ENCODE measurements at regions of chr14 and their contacts with region 1.

Region 1: DNA sequence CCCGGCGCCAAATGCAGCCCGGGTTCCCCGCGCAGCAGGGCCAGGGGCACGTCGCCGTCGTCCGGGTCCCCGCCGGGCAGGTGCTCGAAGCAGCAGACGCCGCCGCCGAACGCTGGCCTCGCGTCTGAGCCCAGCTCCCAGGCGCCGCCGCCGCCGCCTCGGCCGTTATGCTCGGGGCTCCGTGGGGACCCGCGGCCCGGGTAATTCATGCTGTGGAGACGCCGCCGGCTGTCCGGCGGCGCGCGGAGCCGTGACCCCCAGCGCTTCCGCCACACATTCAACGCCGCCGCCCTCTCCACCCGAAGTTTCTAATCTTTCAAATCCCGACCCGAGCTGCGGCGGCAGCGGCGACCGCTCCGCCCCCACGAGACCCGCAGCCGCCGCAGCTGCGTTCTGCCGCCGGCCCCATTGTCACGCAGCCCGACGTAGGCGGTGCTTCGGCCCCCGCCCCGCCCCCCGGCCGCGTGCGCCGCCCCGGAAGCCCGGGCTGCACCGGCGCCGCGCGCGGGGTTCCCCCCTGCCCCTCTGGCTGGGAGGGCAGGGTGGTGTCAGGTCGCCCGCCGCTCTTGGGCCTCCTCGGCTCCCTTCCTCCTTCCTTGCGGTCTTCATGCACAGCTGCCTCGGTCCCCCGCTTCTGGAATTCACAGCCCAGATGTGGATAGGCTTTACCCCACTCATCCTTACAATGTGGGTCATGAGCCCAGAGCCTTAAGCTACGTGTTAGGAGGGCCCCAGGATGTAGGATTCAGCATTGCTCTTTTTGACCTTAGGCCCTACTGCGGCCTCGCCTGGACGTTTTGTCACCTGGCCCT is at the start of gene DDHD1:
- DNase-seq: peak; percentile 88
- H3K4me3 Mint-ChIP-seq: peak within 1 kb of the TSS; percentile 100
- H3K27ac Mint-ChIP-seq: peak within 1 kb of the TSS; percentile 99
- H3K4me1 Mint-ChIP-seq: peaks cover 35% of the 10 kb centered on the region
- H3K27me3 Mint-ChIP-seq: no peaks in the 10 kb centered on the region
- total RNA-seq, gene DDHD1: 40.6 to 42.7 TPM

Region 2: GRCh38 chr14:52729925-52730667 is 423.0 kb before region 1 on chr14 and contains the start of gene STYX:
- CTCF ChIA-PET with region 1: no interaction called
- POLR2A ChIA-PET with region 1: interaction called, 3 read pairs
- intact Hi-C with region 1: loop called (anchors 10 kb)
- DNase-seq: peak; percentile 99
- H3K4me3 Mint-ChIP-seq: peak within 1 kb of the TSS; percentile 87
- H3K27ac Mint-ChIP-seq: peak within 1 kb of the TSS; percentile 82
- H3K4me1 Mint-ChIP-seq: peaks cover 29% of the 10 kb centered on the region
- H3K27me3 Mint-ChIP-seq: no peaks in the 10 kb centered on the region
- total RNA-seq, gene STYX: 15.9 to 17.0 TPM

Region 3: GRCh38 chr14:52950898-52951689 is 202.0 kb before region 1 on chr14 and contains the start of gene FERMT2:
- CTCF ChIA-PET with region 1: no interaction called
- POLR2A ChIA-PET with region 1: no interaction called
- intact Hi-C with region 1: loop called (anchors 2 kb)
- DNase-seq: peak; percentile 40
- H3K4me3 Mint-ChIP-seq: peak within 1 kb of the TSS; percentile 83
- H3K27ac Mint-ChIP-seq: peak within 1 kb of the TSS; percentile 9
- H3K4me1 Mint-ChIP-seq: peaks cover 33% of the 10 kb centered on the region
- H3K27me3 Mint-ChIP-seq: peaks cover 43% of the 10 kb centered on the region
- total RNA-seq, gene FERMT2: 3.8 to 5.3 TPM

Region 4: DNA sequence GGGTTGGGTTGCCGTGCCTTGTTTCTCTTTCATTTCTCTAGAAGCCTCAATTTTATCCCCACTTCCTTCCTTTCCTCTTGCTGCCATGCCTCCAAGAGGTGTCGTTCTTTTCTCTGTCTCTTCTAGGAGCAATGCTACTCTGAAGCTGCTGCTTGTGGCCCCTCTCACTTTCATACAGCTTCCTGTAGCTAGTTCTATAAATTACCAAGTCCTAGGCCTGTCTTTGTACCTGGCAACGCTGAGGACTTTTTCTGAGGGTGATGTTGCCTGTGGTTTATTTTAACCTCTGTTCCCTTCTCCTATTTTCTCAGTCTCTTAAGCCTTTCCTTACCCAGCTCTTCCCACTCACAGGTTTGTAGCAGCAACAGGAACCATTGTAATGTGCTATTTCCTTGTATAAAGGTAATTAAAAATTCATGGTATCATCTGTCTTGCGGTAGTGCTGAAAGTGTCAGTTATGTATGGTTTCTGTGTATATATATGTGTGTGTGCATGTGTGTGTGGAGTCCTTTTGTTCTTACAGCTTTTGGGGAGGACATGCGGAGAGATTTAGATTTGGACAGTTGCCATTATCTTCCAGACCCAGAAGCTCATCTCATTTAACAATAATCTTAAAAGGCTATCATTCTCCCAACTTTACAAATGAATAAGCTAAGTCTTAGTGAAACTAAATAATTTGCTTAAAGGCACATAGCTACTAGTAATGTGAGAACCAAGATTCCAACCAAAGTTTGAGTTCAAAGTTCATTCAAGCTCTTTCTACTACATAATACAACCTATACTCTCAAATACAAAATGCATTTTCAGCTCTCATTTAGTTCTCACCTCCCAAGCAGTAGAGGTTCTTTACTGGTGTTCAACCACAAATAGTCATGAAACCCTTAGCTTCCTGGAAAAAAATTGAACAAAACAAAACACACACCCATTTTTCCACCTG is 43.7 kb before region 1 on chr14:
- CTCF ChIA-PET with region 1: interaction called, 27 read pairs
- POLR2A ChIA-PET with region 1: interaction called, 55 read pairs
- intact Hi-C with region 1: loop called (anchors 1 kb)
- DNase-seq: peak; percentile 76
- H3K4me3 Mint-ChIP-seq: no peak overlapping the region
- H3K27ac Mint-ChIP-seq: no peak overlapping the region
- H3K4me1 Mint-ChIP-seq: peaks cover 23% of the 10 kb centered on the region
- H3K27me3 Mint-ChIP-seq: no peaks in the 10 kb centered on the region

Region 5: GRCh38 chr14:53180268-53181221 is 27.4 kb after region 1 on chr14:
- CTCF ChIA-PET with region 1: interaction called, 15 read pairs
- POLR2A ChIA-PET with region 1: interaction called, 5 read pairs
- intact Hi-C with region 1: loop called (anchors 1 kb)
- DNase-seq: peak; percentile 75
- H3K4me3 Mint-ChIP-seq: peak overlapping the region; percentile 3
- H3K27ac Mint-ChIP-seq: peak overlapping the region; percentile 67
- H3K4me1 Mint-ChIP-seq: peaks cover 41% of the 10 kb centered on the region
- H3K27me3 Mint-ChIP-seq: no peaks in the 10 kb centered on the region

Region 6: GRCh38 chr14:53217295-53217994 is 64.3 kb after region 1 on chr14:
- CTCF ChIA-PET with region 1: interaction called, 5 read pairs
- POLR2A ChIA-PET with region 1: interaction called, 10 read pairs
- intact Hi-C with region 1: loop called (anchors 1 kb)
- DNase-seq: peak; percentile 88
- H3K4me3 Mint-ChIP-seq: peak overlapping the region; percentile 80
- H3K27ac Mint-ChIP-seq: peak overlapping the region; percentile 52
- H3K4me1 Mint-ChIP-seq: peaks cover 5% of the 10 kb centered on the region
- H3K27me3 Mint-ChIP-seq: no peaks in the 10 kb centered on the region

Region 7: DNA sequence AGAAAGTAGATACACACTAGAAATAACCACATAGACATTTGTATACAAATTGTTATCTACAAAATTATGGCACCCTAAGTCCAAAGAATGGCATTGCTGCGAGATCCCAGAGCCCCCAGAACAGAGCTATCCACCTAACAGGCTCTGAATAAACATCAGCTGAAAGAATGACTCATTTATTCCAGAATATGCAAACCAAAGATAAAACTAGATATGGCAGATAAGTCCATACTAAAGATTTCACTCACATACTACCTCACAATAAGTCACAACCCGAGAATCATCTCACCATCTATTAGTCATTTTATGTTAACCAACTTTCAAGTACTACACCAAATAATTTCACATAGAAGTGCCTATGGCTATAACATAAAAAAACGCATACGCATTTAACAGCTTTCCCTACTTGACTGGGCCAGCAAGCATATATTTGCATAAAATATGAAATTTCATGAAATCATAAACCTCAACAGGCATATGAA is 1282.4 kb after region 1 on chr14:
- CTCF ChIA-PET with region 1: no interaction called
- POLR2A ChIA-PET with region 1: no interaction called
- intact Hi-C with region 1: loop called (anchors 2 kb)
- DNase-seq: peak; percentile 40
- H3K4me3 Mint-ChIP-seq: peak overlapping the region; percentile 61
- H3K27ac Mint-ChIP-seq: peak overlapping the region; percentile 76
- H3K4me1 Mint-ChIP-seq: peaks cover 82% of the 10 kb centered on the region
- H3K27me3 Mint-ChIP-seq: no peaks in the 10 kb centered on the region